Esophagus squamous epithelium (tissue), 5 donors: ENCODE measurements at regions of chr14 and their contacts with region 1.

Region 1: DNA sequence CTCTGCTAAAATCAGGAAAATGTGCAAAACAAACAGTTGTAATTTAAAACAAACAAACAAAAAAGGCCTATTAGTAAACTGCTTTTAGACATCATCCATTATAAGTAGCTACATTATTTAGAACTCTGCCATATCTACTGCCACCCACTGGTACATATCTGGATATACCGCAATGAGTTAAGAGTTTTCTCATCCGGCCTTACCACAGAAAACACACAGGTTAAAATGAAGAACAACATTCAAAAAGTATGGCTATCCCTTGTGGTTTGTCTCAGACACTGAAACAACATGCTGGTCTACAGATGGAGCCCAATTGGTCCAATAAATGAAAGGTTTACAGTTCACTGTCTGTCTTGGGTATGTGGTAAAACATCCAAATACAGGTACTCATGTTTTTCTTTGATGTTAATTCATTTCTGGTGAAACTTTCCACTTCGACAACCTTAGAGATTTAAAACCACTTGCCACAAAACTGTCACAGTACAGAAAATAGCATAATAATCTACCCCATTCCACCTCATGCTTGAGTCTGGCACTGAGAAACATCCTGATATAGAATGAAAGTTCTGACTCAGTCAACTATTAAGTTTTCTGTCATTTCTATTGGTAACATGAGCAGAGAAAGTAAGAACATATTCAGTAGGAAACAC is 354.3 kb downstream of the CEP128 start:
- DNase-seq: no peak
- H3K4me3 ChIP-seq: no peak overlapping the region
- H3K27ac ChIP-seq: no peak overlapping the region
- H3K4me1 ChIP-seq: peaks cover 0 to 31% (median 5%) of the 10 kb centered on the region in 3 donors
- H3K27me3 ChIP-seq: no peaks in the 10 kb centered on the region
- CTCF ChIP-seq: peak in 5 of 6 experiments; percentile 29 to 68 (median 39)
- POLR2A ChIP-seq: no peak

Region 2: DNA sequence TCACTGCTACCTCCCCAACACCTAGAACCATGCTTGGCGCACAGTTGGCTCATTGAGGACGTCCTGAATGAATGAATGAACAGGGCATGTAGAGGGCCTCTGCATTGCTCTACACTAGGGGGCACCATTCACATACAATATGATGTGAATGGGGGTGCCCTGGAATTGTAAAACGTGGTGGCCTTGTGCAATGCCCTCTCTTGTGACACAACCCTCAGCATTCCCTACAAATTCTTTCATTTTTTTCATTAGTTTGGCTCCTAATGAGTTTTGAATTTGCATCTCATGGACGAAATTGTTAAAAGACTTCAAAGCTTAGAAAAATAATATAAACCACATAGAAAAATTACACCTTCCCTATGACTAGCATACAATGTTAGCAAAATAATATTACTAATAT is 373.6 kb before region 1 on chr14:
- intact Hi-C with region 1: loop called (anchors 10 kb)
- DNase-seq: no peak
- H3K4me3 ChIP-seq: no peak overlapping the region
- H3K27ac ChIP-seq: no peak overlapping the region
- H3K4me1 ChIP-seq: peaks cover 3 to 53% (median 8%) of the 10 kb centered on the region in 3 donors
- H3K27me3 ChIP-seq: peaks cover 0 to 11% (median 0%) of the 10 kb centered on the region in 4 donors
- CTCF ChIP-seq: peak in 5 of 6 experiments; percentile 34 to 62 (median 46)
- POLR2A ChIP-seq: no peak